HEK293T (cell line): ENCODE measurements at regions of chr22 and their contacts with region 1.

Region 1: GRCh38 chr22:40426594-40427333 is 56.4 kb downstream of the SGSM3 start:
- DNase-seq: no peak

Region 2: GRCh38 chr22:40436505-40437451 is 10.0 kb after region 1 on chr22:
- CTCF ChIA-PET with region 1: interaction called, 10 read pairs
- POLR2A ChIA-PET with region 1: no interaction called
- DNase-seq: peak; percentile 58

Region 3: DNA sequence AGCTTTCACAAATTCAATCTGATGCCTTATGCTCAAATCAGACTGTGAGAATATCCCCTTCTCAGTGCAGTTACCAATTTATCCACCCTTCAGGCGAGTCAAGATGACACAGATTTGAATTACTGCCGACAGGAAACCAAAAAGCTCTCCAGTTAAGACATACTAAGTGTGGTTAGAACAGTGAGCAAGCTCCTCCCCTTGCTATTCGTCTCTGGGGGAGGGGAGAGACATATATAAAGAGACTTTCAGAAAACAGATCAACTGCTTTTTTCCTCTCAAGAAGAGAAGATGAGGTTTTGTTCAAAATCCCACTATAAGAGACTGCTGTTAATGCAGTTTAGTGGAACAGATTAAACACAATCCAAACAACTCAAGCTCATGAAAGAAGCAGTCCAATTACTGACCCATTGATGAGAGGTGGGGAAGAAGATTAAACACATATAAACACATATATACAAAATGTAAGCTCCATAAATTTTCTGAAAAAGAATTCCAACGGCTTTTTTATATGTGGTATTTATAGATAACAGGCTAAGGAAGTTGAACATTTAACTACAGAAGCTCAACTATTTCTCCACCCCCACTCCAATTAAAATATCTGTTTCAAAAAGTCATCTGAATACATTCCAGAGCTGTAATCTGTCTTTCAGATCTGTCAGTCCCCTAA is 107.1 kb after region 1 on chr22:
- CTCF ChIA-PET with region 1: no interaction called
- POLR2A ChIA-PET with region 1: no interaction called
- DNase-seq: peak; percentile 45